Activated CD8-positive, alpha-beta memory T cell treated with anti-CD3 and anti-CD28 coated beads, Interleukin-2, amount 10 ng/mL, durations not matched to agents 7 days and 5 days (primary cell): ENCODE measurements at regions of chr20 and their contacts with region 1.

Region 1: GRCh38 chr20:49594143-49594930 is 26.4 kb upstream of the PTGIS start:
- DNase-seq: peak; percentile 96
- ATAC-seq: peak; percentile 66
- H3K4me3 Mint-ChIP-seq: peak overlapping the region; percentile 94
- H3K27ac Mint-ChIP-seq: peak overlapping the region; percentile 99
- H3K4me1 Mint-ChIP-seq: peaks cover 88% of the 10 kb centered on the region
- H3K27me3 Mint-ChIP-seq: no peaks in the 10 kb centered on the region

Region 2: GRCh38 chr20:49278036-49278817 is 316.1 kb before region 1 on chr20 and contains the start of gene ZNFX1:
- CTCF ChIA-PET with region 1: no interaction called
- DNase-seq: peak; percentile 99
- ATAC-seq: peak; percentile 84
- H3K4me3 Mint-ChIP-seq: peak within 1 kb of the TSS; percentile 94
- H3K27ac Mint-ChIP-seq: peak within 1 kb of the TSS; percentile 92
- H3K4me1 Mint-ChIP-seq: peaks cover 52% of the 10 kb centered on the region
- H3K27me3 Mint-ChIP-seq: no peaks in the 10 kb centered on the region
- total RNA-seq, gene ZNFX1: 69.2 to 88.6 TPM

Region 3: GRCh38 chr20:49477200-49477599 is 117.1 kb before region 1 on chr20:
- CTCF ChIA-PET with region 1: no interaction called
- DNase-seq: no peak
- ATAC-seq: no peak
- H3K4me3 Mint-ChIP-seq: no peak overlapping the region
- H3K27ac Mint-ChIP-seq: no peak overlapping the region
- H3K4me1 Mint-ChIP-seq: no peaks in the 10 kb centered on the region
- H3K27me3 Mint-ChIP-seq: peaks cover 54% of the 10 kb centered on the region

Region 4: DNA sequence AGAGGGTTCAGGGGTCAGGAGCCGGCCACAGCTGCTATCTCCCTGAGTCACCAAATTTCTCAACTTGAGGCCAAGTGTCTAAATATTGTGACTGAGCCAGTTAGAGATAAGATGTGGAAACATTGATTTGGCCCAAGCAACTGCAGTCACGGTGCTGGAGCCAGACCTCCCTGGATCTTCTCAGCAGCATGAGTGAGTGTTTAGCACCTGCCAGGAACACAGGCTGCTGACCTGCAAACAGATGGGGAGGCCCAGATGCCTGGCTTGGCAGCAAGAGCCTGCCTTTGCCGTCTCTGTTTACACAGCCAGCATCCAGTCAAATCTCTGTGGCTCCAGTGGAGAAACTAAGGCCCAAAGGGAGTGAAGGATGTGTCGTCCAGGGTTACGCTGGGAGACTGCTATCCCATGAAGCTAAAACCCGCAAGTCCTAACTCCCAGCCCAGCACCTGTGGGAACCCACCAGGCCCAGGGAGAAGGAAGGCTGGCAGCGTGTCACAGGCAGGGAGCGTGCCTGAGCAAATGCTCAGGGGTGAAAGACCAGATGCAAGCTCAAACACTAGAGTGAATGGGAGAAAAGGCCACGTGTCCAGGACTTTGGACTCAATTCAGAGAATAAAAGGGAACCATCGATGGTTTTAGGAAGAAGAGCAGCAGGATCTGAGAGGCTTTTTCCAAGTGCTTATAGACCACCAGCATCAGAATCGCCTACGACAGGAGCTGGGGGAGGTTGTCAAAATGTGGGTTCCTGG is 10.5 kb before region 1 on chr20:
- CTCF ChIA-PET with region 1: interaction called, 10 read pairs
- DNase-seq: no peak
- ATAC-seq: no peak
- H3K4me3 Mint-ChIP-seq: no peak overlapping the region
- H3K27ac Mint-ChIP-seq: no peak overlapping the region
- H3K4me1 Mint-ChIP-seq: peaks cover 38% of the 10 kb centered on the region
- H3K27me3 Mint-ChIP-seq: no peaks in the 10 kb centered on the region